MCF 10A (cell line): ENCODE measurements at regions of chr4 and their contacts with region 1.

Region 1: GRCh38 chr4:189090174-189090814 is 850.4 kb upstream of the FRG1 start:
- DNase-seq: peak; percentile 50
- H3K4me3 Mint-ChIP-seq: no peak overlapping the region
- H3K27ac Mint-ChIP-seq: no peak overlapping the region
- H3K4me1 Mint-ChIP-seq: peaks cover 9% of the 10 kb centered on the region
- H3K27me3 Mint-ChIP-seq: no peaks in the 10 kb centered on the region
- CTCF ChIP-seq: peak; percentile 51

Region 2: DNA sequence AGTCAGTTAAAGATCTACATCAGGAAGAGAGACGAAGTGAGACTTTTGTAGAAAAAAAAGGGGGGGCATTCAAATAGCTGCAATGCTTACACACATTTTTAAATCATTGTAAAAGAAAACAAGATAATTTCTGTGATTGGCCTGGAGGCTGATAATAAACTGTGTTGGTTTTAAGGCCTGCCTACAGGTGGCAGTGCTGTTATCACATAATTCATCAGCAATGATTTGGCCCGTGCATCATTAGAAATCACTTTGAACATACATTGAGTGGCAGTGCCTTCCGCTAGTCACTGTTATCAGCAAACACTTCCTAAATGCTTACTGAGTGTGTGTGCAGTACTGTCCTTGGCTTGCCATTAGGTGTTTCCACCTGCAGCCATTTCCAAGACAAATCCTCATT is 119.2 kb before region 1 on chr4:
- CTCF ChIA-PET with region 1: interaction called, 11 read pairs
- POLR2A ChIA-PET with region 1: no interaction called
- intact Hi-C with region 1: no loop called
- DNase-seq: peak; percentile 57
- H3K4me3 Mint-ChIP-seq: no peak overlapping the region
- H3K27ac Mint-ChIP-seq: no peak overlapping the region
- H3K4me1 Mint-ChIP-seq: no peaks in the 10 kb centered on the region
- H3K27me3 Mint-ChIP-seq: no peaks in the 10 kb centered on the region
- CTCF ChIP-seq: peak; percentile 36

Region 3: DNA sequence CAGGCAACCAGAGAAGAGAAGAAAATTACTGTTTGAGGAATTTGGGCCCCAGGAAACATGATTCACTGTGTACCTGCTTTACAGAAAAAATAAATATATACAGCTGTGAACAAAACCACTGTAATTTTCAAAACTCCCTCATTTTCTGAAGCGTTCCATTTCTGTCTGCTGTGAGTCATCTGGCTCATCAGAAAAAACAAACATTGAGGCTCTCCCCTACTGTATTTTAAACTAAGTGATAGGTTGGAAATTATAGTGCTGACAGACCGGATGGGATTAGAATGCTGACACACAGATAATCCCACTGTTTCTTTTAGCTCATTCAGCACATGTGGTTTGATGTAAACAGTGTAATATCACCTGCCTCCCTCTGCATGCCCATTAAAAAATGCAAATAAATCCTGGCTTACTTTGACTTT is 104.0 kb before region 1 on chr4:
- CTCF ChIA-PET with region 1: interaction called, 3 read pairs
- POLR2A ChIA-PET with region 1: no interaction called
- intact Hi-C with region 1: loop called (anchors 10 kb)
- DNase-seq: peak; percentile 79
- H3K4me3 Mint-ChIP-seq: no peak overlapping the region
- H3K27ac Mint-ChIP-seq: no peak overlapping the region
- H3K4me1 Mint-ChIP-seq: peaks cover 6% of the 10 kb centered on the region
- H3K27me3 Mint-ChIP-seq: no peaks in the 10 kb centered on the region
- CTCF ChIP-seq: no peak

Region 4: GRCh38 chr4:189143262-189143952 is 53.1 kb after region 1 on chr4:
- CTCF ChIA-PET with region 1: no interaction called
- POLR2A ChIA-PET with region 1: no interaction called
- intact Hi-C with region 1: no loop called
- DNase-seq: peak; percentile 100
- H3K4me3 Mint-ChIP-seq: no peak overlapping the region
- H3K27ac Mint-ChIP-seq: peak overlapping the region; percentile 71
- H3K4me1 Mint-ChIP-seq: peaks cover 8% of the 10 kb centered on the region
- H3K27me3 Mint-ChIP-seq: no peaks in the 10 kb centered on the region
- CTCF ChIP-seq: no peak